Activated naive CD4-positive, alpha-beta T cell treated with anti-CD3 and anti-CD28 coated beads, Interleukin-2, amount 10 ng/mL, durations not matched to agents 7 days and 5 days (primary cell): ENCODE measurements at regions of chr9 and their contacts with region 1.

Region 1: GRCh38 chr9:124551472-124552272 is 44.5 kb upstream of the NR5A1 start:
- DNase-seq: peak; percentile 52
- H3K4me3 Mint-ChIP-seq: no peak overlapping the region
- H3K27ac Mint-ChIP-seq: no peak overlapping the region
- H3K4me1 Mint-ChIP-seq: peaks cover 7% of the 10 kb centered on the region
- H3K27me3 Mint-ChIP-seq: peaks cover 5% of the 10 kb centered on the region

Region 2: DNA sequence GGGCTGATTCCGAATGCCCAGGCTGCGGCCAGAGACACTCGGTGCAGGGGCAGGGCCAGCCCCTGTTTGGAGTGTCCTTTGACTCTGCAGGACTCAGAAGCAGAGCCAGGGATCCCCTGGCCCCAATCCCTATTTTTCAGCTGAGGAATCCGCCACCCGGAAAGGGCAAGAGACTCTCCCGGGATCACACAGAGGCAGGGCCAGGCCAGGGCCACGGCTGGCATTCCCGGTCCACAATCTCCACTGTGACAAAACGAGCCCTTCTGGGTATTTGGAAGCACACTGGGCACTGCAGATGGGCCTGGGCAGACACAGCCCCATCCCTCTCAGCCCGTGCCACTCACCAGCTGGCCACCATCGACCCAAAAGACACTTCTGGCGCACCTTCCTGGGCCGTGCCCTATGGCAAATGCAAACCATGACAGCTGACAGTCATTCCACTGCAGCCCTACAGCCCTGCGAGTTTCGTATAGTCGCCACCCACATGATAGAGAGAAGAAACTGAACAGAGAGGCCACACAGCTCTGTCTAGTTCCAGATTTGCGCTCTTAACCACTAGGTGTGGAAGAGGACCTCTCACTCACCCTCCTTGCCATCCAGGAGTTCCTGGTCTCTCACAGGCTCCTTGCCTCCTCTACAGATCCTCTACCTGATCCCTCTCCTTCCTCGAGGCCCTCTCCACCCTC is 57.7 kb before region 1 on chr9:
- CTCF ChIA-PET with region 1: no interaction called
- DNase-seq: no peak
- H3K4me3 Mint-ChIP-seq: no peak overlapping the region
- H3K27ac Mint-ChIP-seq: no peak overlapping the region
- H3K4me1 Mint-ChIP-seq: peaks cover 16% of the 10 kb centered on the region
- H3K27me3 Mint-ChIP-seq: peaks cover 3% of the 10 kb centered on the region

Region 3: DNA sequence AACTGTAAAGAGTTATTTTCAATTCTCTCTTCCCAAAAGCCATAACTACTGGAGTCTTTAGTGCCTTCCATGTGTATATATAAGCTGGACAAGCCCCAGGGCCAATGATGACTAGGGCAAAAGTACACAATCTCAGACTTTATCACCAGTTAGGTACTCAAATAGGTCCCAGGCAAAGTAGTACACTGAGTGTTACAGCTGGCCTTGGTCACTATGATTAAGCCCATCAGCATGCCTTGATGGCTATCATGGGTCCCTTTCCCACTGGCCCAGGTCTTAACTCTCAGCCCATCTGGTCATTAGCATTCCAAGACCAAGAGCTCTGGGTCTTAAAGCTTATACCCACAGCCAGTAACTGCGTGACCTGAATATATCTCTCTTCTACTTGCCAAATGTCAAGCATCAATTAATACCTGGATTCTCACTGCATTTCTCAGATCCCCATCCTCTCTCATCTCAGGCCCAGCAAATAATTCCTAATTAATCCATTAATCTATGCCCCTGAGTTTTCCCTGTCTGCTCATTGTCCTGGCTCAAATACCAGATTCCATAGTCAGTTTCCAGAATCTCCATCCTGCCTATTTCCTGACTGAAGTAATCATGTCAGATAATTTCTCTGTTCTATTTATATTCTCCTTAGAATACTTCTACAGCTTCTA is 157.1 kb after region 1 on chr9:
- CTCF ChIA-PET with region 1: interaction called, 45 read pairs
- DNase-seq: no peak
- H3K4me3 Mint-ChIP-seq: no peak overlapping the region
- H3K27ac Mint-ChIP-seq: no peak overlapping the region
- H3K4me1 Mint-ChIP-seq: no peaks in the 10 kb centered on the region
- H3K27me3 Mint-ChIP-seq: peaks cover 12% of the 10 kb centered on the region